ENCODE measurements at regions of chr1 and their contacts with region 1.

Region 1: DNA sequence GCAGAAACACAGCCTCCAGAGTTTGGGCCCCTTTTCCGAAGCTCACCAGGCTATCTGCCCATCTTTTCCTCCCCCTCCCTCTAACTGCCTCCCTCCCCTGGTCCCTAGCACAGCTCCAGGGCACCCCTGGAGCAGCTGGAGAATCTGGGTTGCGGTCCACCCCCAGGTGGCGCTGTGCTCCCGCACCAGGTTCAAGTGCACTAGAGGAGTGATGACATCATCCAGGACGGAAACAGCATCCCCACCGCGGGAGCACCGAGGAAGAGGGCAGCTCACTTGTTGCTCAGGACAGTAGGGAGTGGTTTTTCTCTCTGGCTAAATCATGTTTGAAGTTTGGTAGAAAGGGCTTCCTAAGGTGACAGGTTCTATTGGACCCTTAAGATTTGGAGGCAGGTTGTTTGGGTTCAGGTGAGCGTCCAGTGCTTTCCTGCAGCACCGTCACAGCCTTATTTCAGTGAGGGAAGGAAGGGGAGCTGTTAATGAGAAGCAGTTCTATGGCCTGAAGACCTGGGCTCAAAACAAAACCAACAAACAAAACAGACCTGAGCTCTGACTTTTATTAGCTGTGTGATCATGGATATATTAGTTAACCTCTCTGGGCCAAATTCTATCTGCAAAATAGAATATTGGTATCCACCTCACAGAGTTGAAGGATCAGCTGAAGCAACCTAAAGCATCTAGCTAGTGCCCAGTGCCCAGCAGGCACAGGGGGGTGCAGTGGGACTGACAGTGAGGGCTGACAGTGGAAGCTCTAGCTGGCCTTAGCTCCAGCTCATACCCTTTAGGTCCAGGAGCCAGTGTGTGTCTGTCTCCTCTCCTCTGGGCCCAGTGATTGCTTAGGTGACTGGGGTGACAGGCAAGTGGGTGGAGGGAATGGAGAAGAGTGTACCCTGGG is 7.5 kb downstream of the SHISA4 start:
- DNase-seq: peak; percentile 92
- H3K4me3 Mint-ChIP-seq: peak overlapping the region; percentile 34
- H3K27ac Mint-ChIP-seq: no peak overlapping the region
- H3K4me1 Mint-ChIP-seq: peaks cover 7% of the 10 kb centered on the region
- H3K27me3 Mint-ChIP-seq: peaks cover 21% of the 10 kb centered on the region

Region 2: GRCh38 chr1:201828820-201829774 is 67.1 kb before region 1 on chr1 and contains the start of gene IPO9:
- CTCF ChIA-PET with region 1: interaction called, 18 read pairs
- POLR2A ChIA-PET with region 1: no interaction called
- intact Hi-C with region 1: no loop called
- DNase-seq: peak; percentile 97
- H3K4me3 Mint-ChIP-seq: peak within 1 kb of the TSS; percentile 99
- H3K27ac Mint-ChIP-seq: peak within 1 kb of the TSS; percentile 94
- H3K4me1 Mint-ChIP-seq: peaks cover 30% of the 10 kb centered on the region
- H3K27me3 Mint-ChIP-seq: no peaks in the 10 kb centered on the region
- total RNA-seq, gene IPO9: 67.6 to 67.9 TPM

Region 3: GRCh38 chr1:201885531-201886075 is 10.6 kb before region 1 on chr1:
- CTCF ChIA-PET with region 1: interaction called, 55 read pairs
- POLR2A ChIA-PET with region 1: interaction called, 4 read pairs
- intact Hi-C with region 1: no loop called
- DNase-seq: no peak
- H3K4me3 Mint-ChIP-seq: no peak overlapping the region
- H3K27ac Mint-ChIP-seq: no peak overlapping the region
- H3K4me1 Mint-ChIP-seq: peaks cover 8% of the 10 kb centered on the region
- H3K27me3 Mint-ChIP-seq: peaks cover 25% of the 10 kb centered on the region

Region 4: GRCh38 chr1:201955009-201955728 is 59.0 kb after region 1 on chr1 and contains the start of gene TIMM17A:
- CTCF ChIA-PET with region 1: interaction called, 33 read pairs
- POLR2A ChIA-PET with region 1: interaction called, 5 read pairs
- intact Hi-C with region 1: loop called (anchors 5 kb)
- DNase-seq: peak; percentile 97
- H3K4me3 Mint-ChIP-seq: peak within 1 kb of the TSS; percentile 99
- H3K27ac Mint-ChIP-seq: peak within 1 kb of the TSS; percentile 87
- H3K4me1 Mint-ChIP-seq: peaks cover 20% of the 10 kb centered on the region
- H3K27me3 Mint-ChIP-seq: no peaks in the 10 kb centered on the region
- total RNA-seq, gene TIMM17A: 66.5 to 67.2 TPM

Region 5: DNA sequence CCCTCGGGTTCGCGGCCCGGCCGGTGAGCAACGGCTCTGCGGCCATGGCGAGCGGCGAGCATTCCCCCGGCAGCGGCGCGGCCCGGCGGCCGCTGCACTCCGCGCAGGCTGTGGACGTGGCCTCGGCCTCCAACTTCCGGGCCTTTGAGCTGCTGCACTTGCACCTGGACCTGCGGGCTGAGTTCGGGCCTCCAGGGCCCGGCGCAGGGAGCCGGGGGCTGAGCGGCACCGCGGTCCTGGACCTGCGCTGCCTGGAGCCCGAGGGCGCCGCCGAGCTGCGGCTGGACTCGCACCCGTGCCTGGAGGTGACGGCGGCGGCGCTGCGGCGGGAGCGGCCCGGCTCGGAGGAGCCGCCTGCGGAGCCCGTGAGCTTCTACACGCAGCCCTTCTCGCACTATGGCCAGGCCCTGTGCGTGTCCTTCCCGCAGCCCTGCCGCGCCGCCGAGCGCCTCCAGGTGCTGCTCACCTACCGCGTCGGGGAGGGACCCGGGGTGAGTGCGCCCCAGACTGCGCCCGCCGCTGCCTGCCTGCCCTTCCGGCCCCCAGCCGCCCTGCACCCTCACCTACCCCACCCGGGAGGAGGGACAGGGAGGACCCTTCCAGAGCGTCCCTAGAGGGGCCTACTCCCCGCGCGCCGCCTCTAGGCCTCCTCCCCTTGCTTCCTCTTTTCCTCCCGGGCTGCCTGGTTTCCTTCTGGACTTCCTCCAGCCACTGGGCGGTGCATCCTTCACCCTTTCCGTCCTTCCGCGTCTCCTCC is 86.6 kb after region 1 on chr1 and contains the start of gene RNPEP:
- CTCF ChIA-PET with region 1: interaction called, 38 read pairs
- POLR2A ChIA-PET with region 1: no interaction called
- intact Hi-C with region 1: no loop called
- DNase-seq: peak; percentile 67
- H3K4me3 Mint-ChIP-seq: peak within 1 kb of the TSS; percentile 93
- H3K27ac Mint-ChIP-seq: peak within 1 kb of the TSS; percentile 73
- H3K4me1 Mint-ChIP-seq: peaks cover 23% of the 10 kb centered on the region
- H3K27me3 Mint-ChIP-seq: no peaks in the 10 kb centered on the region
- total RNA-seq, gene RNPEP: 48.3 to 50.1 TPM

Region 6: GRCh38 chr1:202135221-202135721 is 239.1 kb after region 1 on chr1:
- CTCF ChIA-PET with region 1: interaction called, 18 read pairs
- POLR2A ChIA-PET with region 1: interaction called, 3 read pairs
- intact Hi-C with region 1: loop called (anchors 5 kb)
- DNase-seq: peak; percentile 62
- H3K4me3 Mint-ChIP-seq: no peak overlapping the region
- H3K27ac Mint-ChIP-seq: no peak overlapping the region
- H3K4me1 Mint-ChIP-seq: no peaks in the 10 kb centered on the region
- H3K27me3 Mint-ChIP-seq: no peaks in the 10 kb centered on the region